ENCODE measurements at regions of chr2 and their contacts with region 1.

Region 1: DNA sequence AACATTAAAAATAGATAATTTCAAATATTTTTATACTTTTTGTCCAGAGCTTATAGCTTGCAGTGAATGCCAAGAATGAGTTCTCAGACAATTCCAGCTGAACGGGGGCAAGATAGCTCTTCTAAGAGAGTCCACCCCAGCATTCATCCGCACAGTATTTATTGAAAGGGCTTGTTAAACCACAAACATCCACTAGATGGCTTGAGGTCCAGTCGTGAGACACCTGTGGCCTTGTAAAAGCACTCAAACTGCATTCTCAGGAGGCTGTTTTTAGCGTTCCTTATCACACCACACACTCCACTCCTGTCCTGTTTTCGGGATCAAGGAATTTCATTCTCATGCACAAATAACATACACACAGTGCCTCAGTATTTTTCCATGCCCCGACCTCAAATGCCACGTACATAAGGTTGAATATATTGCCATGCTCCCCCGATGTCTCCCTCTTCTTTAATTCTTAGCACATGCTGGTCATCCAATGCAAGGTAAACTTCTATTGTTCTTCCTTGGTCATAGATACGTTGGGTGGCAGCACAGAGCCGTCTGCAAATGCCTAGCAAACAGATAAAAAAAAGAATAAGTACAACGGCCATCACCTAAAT is 47.4 kb downstream of the DNAJC10 start:
- DNase-seq: peak in 1 of 42 donors; percentile 24

Region 2: GRCh38 chr2:182807319-182807718 is 43.9 kb after region 1 on chr2:
- intact Hi-C with region 1: no loop called
- DNase-seq: no peak

Region 3: GRCh38 chr2:182977463-182977862 is 214.1 kb after region 1 on chr2:
- intact Hi-C with region 1: loop called (anchors 10 kb)
- DNase-seq: no peak